Activated CD4-positive, alpha-beta T cell treated with anti-CD3 and anti-CD28 coated beads, Interleukin-2, amount 10 ng/mL, durations not matched to agents 24 days and 14 days (primary cell): ENCODE measurements at regions of chr7 and their contacts with region 1.

Region 1: DNA sequence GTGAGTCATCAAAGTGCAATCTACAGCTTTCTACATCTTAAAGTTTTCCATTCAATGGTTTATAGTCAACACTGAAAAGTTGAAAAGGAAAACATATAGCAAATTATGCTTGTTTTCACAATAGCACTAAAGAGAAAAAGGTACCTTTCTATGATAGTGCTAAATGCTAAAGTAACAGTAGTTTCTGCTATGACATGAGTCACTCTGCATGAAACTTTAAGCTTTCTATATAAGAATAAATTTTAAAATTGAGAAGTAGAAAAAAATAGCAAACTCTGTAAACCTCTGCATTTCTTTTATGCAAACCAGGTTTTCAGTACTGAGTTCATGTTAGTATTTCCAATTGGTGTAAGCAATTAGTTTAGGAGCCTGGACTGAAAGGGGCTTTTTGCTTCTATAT is 31.2 kb upstream of the TMEM168 start:
- DNase-seq: no peak
- H3K4me3 Mint-ChIP-seq: no peak overlapping the region
- H3K27ac Mint-ChIP-seq: no peak overlapping the region
- H3K4me1 Mint-ChIP-seq: no peaks in the 10 kb centered on the region
- H3K27me3 Mint-ChIP-seq: no peaks in the 10 kb centered on the region

Region 2: DNA sequence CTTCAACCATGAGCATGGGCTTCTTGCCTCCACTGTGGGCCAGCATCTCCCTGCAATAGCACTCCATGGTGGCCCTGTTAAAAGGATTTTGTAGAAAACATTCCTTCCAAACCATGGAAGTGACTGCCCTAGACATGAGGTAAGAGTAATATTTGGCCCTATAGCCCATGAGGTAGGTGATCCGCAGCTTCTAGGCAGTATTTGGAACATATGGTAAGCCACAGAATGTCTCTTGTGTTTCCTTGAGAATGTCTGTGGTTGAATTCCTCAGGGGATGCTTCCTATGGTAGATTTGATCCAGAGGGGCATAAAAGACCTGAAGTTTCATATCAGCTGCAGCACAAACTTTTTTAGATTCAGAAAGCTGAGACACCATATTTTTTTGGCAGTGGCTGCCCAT is 86.1 kb before region 1 on chr7:
- intact Hi-C with region 1: no loop called
- DNase-seq: no peak
- H3K4me3 Mint-ChIP-seq: no peak overlapping the region
- H3K27ac Mint-ChIP-seq: no peak overlapping the region
- H3K4me1 Mint-ChIP-seq: no peaks in the 10 kb centered on the region
- H3K27me3 Mint-ChIP-seq: no peaks in the 10 kb centered on the region

Region 3: GRCh38 chr7:112869111-112869757 is 47.9 kb after region 1 on chr7:
- intact Hi-C with region 1: loop called (anchors 5 kb)
- DNase-seq: peak; percentile 84
- H3K4me3 Mint-ChIP-seq: no peak overlapping the region
- H3K27ac Mint-ChIP-seq: no peak overlapping the region
- H3K4me1 Mint-ChIP-seq: peaks cover 7% of the 10 kb centered on the region
- H3K27me3 Mint-ChIP-seq: no peaks in the 10 kb centered on the region

Region 4: GRCh38 chr7:112926018-112926417 is 104.7 kb after region 1 on chr7:
- intact Hi-C with region 1: no loop called
- DNase-seq: no peak
- H3K4me3 Mint-ChIP-seq: no peak overlapping the region
- H3K27ac Mint-ChIP-seq: no peak overlapping the region
- H3K4me1 Mint-ChIP-seq: peaks cover 4% of the 10 kb centered on the region
- H3K27me3 Mint-ChIP-seq: no peaks in the 10 kb centered on the region

Region 5: GRCh38 chr7:113464096-113464855 is 642.9 kb after region 1 on chr7:
- intact Hi-C with region 1: no loop called
- DNase-seq: no peak
- H3K4me3 Mint-ChIP-seq: no peak overlapping the region
- H3K27ac Mint-ChIP-seq: no peak overlapping the region
- H3K4me1 Mint-ChIP-seq: no peaks in the 10 kb centered on the region
- H3K27me3 Mint-ChIP-seq: no peaks in the 10 kb centered on the region